ENCODE measurements at regions of chr1 and their contacts with region 1.

Region 1: DNA sequence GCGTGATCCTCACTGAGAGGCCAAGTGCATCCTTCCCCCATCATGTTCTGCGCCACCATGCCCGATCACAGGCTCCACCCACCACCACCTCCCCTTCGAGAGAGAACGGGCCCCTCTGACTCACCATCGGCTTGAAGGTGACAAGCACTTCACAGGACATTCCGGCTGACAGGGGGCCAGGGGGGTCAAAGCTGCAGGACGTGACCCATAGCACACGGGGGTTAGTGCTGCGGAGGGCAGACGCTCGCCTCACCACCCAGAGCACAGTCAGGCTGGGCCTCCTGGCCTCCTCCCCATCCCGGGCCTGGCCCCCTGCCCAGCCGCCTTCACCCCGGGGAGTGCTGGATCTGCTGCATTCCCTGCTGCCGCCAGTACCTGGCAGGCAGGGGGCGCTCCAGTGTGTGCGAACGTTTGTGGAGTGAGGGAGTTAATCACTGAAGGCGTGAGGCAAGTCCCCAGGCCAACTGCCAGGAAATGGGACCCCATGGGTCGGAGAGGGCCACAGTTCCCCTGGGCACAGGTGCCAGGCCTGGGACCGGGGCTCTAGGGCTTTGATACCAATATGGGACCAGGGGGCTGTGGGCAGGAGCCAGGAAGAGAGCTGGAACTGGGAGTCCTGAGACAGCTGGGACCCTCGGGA is 40.9 kb upstream of the TMEM52 start:
- H3K4me3 ChIP-seq: peak overlapping the region; percentile 6
- H3K27ac ChIP-seq: no peak overlapping the region
- H3K4me1 ChIP-seq: no peaks in the 10 kb centered on the region
- CTCF ChIP-seq: peak; percentile 92

Region 2: DNA sequence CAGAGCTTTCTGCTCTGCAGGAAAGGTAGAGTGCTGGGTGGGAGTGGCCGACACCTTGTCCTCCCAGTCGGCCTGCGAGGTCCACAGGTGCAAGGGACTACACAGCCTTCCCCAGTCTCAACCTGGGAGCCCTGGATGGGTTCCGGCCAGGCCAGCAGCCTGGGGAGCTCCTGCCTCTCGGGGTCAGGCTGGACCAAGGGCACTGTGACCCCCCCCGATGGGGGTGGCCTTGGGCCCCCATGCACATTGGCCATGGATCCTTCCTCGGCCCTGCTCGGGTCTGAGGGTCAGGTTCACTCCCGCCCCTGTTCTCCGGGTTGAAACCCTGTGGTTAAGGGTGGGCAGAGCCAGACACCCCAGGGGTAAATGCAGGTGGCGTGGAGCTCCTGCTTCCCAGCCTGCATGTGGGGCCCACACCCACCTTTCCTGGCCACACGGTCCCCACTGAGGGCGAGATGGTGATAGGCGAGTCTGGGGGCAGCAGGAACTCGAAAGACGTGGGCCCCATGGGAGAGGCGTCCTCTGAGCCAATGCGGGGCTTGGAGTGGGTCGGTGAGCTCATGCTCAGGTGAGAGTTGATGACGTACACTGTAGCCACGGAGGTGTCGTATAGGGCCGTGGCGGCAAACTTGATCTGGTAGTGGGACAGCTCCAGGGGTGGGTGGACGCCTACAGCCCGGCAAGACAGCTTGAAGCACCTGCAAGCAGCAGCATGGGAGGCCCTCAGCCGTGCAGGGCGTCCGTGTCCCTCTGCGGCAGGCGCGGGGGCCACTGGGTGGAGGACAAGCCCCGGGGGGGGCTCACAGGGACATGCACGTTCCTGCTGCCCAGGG is 30.1 kb before region 1 on chr1:
- CTCF ChIA-PET with region 1: interaction called, 11 read pairs
- POLR2A ChIA-PET with region 1: no interaction called
- H3K4me3 ChIP-seq: no peak overlapping the region
- H3K27ac ChIP-seq: no peak overlapping the region
- H3K4me1 ChIP-seq: no peaks in the 10 kb centered on the region
- CTCF ChIP-seq: no peak

Region 3: DNA sequence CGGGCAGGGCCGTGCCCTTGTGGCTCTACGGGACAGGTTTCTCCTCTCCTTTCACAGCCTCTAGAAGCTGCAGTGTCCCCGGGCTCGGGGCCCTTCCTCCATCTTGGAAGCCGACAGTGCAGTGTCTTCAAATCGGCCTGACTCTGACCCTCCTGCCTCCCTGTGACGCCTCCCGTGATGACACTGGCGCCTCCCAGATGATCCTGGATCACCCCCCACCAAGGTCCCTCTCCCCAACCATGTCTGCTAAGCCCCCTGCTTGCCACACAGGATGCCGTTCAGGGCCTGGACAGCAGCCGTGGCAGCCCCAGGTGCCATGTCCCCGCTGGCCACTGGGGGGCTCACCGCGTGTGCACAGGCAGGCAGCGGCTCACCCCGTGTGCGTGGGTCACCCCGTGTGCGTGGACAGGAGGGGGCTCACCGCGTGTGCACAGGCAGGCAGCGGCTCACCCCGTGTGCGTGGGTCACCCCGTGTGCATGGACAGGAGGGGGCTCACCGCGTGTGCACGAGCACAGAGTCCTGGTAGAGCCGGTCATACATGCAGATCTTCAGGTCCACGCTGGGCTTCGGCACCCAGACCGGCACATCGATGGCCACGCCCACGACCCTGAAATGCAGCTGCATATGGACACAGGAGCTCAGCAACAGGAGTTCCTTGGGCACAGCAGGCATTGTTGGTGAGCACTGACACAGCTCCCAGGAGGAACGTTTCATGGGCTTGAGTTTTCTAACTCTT is 16.0 kb before region 1 on chr1:
- CTCF ChIA-PET with region 1: interaction called, 34 read pairs
- POLR2A ChIA-PET with region 1: no interaction called
- H3K4me3 ChIP-seq: peak overlapping the region; percentile 44
- H3K27ac ChIP-seq: no peak overlapping the region
- H3K4me1 ChIP-seq: no peaks in the 10 kb centered on the region
- CTCF ChIP-seq: peak; percentile 97

Region 4: DNA sequence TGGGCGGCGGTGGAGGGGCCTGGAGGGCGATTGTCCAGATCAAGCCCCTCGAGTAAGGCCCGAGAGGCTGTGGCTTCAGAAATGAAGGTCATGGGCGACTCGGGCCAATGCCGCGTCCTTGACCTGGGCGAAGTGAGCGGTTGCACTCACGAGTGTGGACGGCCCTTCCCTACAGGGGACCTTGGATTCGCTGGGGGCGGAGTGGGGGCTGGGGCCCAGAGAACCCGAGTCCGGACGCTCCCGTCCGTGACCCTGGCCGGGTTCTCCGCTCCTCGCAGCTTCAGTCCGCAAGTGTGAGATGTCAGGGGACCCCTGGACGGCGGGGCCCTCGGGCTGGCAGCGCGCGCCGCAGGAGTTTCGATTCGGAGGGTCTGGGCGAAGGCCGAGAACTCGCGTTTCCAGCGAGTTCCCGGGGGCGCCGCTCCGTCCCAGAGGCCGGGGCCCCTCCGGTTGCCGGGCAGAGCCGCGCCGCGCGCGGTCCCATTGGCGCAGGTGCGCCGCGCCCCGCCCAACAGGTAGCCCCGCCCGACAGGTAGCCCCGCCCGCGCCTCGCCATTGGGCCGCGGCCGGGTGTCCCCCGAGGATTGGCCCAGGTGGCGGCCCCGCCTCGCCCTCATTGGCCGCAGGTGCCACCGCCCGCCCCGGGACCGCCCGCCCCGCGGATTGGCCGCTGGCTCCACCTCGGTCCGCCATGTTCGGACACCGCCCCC is 89.9 kb after region 1 on chr1 and contains the start of gene PRKCZ:
- CTCF ChIA-PET with region 1: interaction called, 118 read pairs
- POLR2A ChIA-PET with region 1: interaction called, 5 read pairs
- H3K4me3 ChIP-seq: peak within 1 kb of the TSS; percentile 75
- H3K27ac ChIP-seq: peak within 1 kb of the TSS; percentile 72
- H3K4me1 ChIP-seq: no peaks in the 10 kb centered on the region; the same call in 1 of the 2 replicates
- CTCF ChIP-seq: no peak; the same call in 1 of the 2 replicates